HepG2 (cell line): ENCODE measurements at regions of chr7 and their contacts with region 1.

Region 1: GRCh38 chr7:8418629-8419245 is 14.7 kb upstream of the NXPH1 start:
- DNase-seq: peak; percentile 52
- ATAC-seq: peak; percentile 84
- H3K4me3 ChIP-seq: no peak overlapping the region
- H3K27ac ChIP-seq: no peak overlapping the region
- H3K4me1 ChIP-seq: no peaks in the 10 kb centered on the region
- H3K27me3 ChIP-seq: no peaks in the 10 kb centered on the region
- CTCF ChIP-seq: peak; percentile 73
- EP300 ChIP-seq: no peak
- POLR2A ChIP-seq: no peak
- RAD21 ChIP-seq: 0 out of 2 replicates have a peak, but pooled peaks have one; percentile 20

Region 2: GRCh38 chr7:8295638-8296361 is 122.9 kb before region 1 on chr7:
- CTCF ChIA-PET with region 1: no interaction called
- POLR2A ChIA-PET with region 1: no interaction called
- in situ Hi-C with region 1: no loop called
- intact Hi-C with region 1: no loop called
- DNase-seq: peak; percentile 80
- ATAC-seq: peak; percentile 92
- H3K4me3 ChIP-seq: no peak overlapping the region
- H3K27ac ChIP-seq: no peak overlapping the region
- H3K4me1 ChIP-seq: no peaks in the 10 kb centered on the region
- H3K27me3 ChIP-seq: no peaks in the 10 kb centered on the region
- CTCF ChIP-seq: peak; percentile 82
- EP300 ChIP-seq: no peak
- POLR2A ChIP-seq: no peak
- RAD21 ChIP-seq: peak; percentile 74

Region 3: DNA sequence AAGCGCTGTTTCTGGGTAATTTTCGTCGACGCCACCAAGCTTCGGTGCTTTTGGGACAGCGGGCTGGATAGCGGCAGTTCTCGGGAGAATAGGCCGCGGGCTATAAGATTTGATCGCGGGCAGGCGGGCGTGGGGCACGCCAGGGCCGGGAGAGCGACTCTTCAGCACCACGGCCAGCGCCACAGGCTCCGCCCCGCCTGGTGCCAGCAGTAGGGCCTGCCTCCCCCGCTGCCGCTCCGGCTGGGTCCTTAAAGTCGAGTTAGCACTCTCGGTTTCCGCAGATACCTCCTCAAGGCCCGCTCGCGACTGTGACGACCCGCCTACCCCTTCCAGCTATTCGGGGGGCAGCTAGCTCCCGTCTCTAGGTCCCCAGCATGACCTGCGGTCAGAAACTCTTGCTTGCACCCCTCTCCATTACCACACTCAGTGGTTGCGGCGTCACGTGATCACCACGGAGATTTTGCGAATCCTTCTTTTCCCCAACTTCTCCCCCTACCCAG is 24.1 kb after region 1 on chr7:
- CTCF ChIA-PET with region 1: no interaction called
- POLR2A ChIA-PET with region 1: no interaction called
- in situ Hi-C with region 1: no loop called
- intact Hi-C with region 1: no loop called
- DNase-seq: no peak
- ATAC-seq: no peak
- H3K4me3 ChIP-seq: no peak overlapping the region
- H3K27ac ChIP-seq: no peak overlapping the region
- H3K4me1 ChIP-seq: no peaks in the 10 kb centered on the region
- H3K27me3 ChIP-seq: no peaks in the 10 kb centered on the region
- CTCF ChIP-seq: no peak
- EP300 ChIP-seq: no peak
- POLR2A ChIP-seq: no peak
- RAD21 ChIP-seq: no peak

Region 4: GRCh38 chr7:8724080-8724718 is 305.5 kb after region 1 on chr7:
- CTCF ChIA-PET with region 1: interaction called, 15 read pairs
- POLR2A ChIA-PET with region 1: no interaction called
- in situ Hi-C with region 1: no loop called
- intact Hi-C with region 1: loop called (anchors 1 kb)
- DNase-seq: peak; percentile 37
- ATAC-seq: peak; percentile 89
- H3K4me3 ChIP-seq: no peak overlapping the region
- H3K27ac ChIP-seq: no peak overlapping the region
- H3K4me1 ChIP-seq: no peaks in the 10 kb centered on the region
- H3K27me3 ChIP-seq: no peaks in the 10 kb centered on the region
- CTCF ChIP-seq: peak; percentile 66
- EP300 ChIP-seq: no peak
- POLR2A ChIP-seq: no peak
- RAD21 ChIP-seq: no peak

Region 5: DNA sequence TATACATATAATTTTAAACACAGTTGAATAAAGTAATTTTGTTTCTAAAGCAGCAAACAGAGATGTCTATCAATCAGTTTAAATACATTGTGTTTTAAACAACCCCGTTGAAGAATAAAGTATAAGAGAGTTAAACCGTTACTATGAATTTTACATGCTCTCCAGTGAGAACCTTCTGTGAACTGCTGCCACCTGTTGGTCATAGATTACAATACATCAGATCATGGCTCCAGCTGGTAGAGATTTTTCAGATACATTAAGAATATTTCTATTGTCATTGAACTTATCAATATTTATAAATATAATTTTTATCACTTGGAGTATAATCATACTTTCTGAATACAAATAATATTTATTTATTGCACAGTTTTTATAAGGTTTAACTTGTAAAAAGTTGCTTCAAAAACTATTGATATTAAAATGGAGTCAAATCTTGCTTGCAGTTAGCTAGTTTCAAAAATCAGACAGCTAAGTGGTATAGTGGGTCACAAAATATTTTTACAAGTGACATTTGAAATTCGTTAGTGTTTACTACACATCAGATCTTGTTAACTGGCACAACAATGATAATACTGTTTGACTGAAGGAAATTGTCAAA is 1993.8 kb after region 1 on chr7:
- CTCF ChIA-PET with region 1: interaction called, 11 read pairs
- POLR2A ChIA-PET with region 1: no interaction called
- in situ Hi-C with region 1: loop called (anchors 25 kb)
- intact Hi-C with region 1: no loop called
- DNase-seq: peak; percentile 30
- ATAC-seq: peak; percentile 53; the same call in 1 of the 3 replicates
- H3K4me3 ChIP-seq: no peak overlapping the region
- H3K27ac ChIP-seq: no peak overlapping the region
- H3K4me1 ChIP-seq: no peaks in the 10 kb centered on the region
- H3K27me3 ChIP-seq: no peaks in the 10 kb centered on the region
- CTCF ChIP-seq: peak; percentile 52
- EP300 ChIP-seq: no peak
- POLR2A ChIP-seq: no peak
- RAD21 ChIP-seq: no peak